T-cell (primary cell): ENCODE measurements at regions of chr2 and their contacts with region 1.

Region 1: GRCh38 chr2:230712443-230713330 is at the start of gene CAB39:
- DNase-seq: peak; percentile 74 to 96 (median 84)
- ATAC-seq: peak; percentile 84 to 89 (median 87)
- H3K4me3 ChIP-seq: peak within 1 kb of the TSS; percentile 84 to 95
- H3K4me3 Mint-ChIP-seq: peak within 1 kb of the TSS; percentile 91 to 99 (median 96)
- H3K27ac ChIP-seq: peak within 1 kb of the TSS; percentile 76
- H3K27ac Mint-ChIP-seq: peak within 1 kb of the TSS; percentile 95 to 98
- H3K4me1 ChIP-seq: peaks cover 27% of the 10 kb centered on the region in 2 experiments
- H3K4me1 Mint-ChIP-seq: peaks cover 40 to 50% (median 48%) of the 10 kb centered on the region in 3 donors
- H3K27me3 ChIP-seq: no peaks in the 10 kb centered on the region
- H3K27me3 Mint-ChIP-seq: no peaks in the 10 kb centered on the region
- total RNA-seq, gene CAB39: 91.7 to 102 (median 96.7) TPM

Region 2: DNA sequence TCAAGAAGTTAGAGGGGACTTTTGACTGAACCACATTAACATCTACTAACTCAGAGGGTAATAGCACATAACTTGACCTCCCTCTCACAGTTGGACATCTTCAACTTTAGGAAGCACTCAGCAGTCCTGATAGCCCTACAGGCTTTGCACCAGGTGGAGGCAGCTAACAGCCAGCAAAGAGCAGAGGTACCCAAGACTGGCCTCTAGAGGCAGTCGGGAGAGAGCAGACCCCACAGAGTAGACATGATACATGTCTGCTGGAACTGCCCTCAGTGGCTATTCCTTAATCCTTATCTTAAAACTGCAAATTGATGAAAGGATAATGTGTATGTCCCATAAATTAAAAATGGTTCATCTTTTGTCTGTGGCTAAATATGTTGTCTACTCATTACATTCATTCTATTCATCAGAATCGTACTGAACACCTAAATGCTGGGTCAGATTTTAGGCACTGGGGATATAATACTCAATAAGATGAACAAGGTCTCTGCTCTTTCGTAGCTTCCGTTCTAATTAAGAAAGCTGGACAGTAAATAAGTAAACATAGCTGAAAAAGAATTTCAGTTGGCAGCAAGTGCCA is 49.7 kb after region 1 on chr2:
- CTCF ChIA-PET with region 1: interaction called in 1 of 2 experiments, 10 read pairs
- POLR2A ChIA-PET with region 1: interaction called in 1 of 2 experiments, 3 read pairs
- DNase-seq: peak in 30 of 35 experiments; percentile 6 to 53 (median 18)
- ATAC-seq: peak; percentile 75 to 90 (median 86)
- H3K4me3 ChIP-seq: no peak overlapping the region
- H3K4me3 Mint-ChIP-seq: no peak overlapping the region
- H3K27ac ChIP-seq: no peak overlapping the region
- H3K27ac Mint-ChIP-seq: no peak overlapping the region
- H3K4me1 ChIP-seq: peaks cover 10 to 12% of the 10 kb centered on the region in 2 experiments
- H3K4me1 Mint-ChIP-seq: peaks cover 59 to 70% (median 62%) of the 10 kb centered on the region in 3 donors
- H3K27me3 ChIP-seq: no peaks in the 10 kb centered on the region
- H3K27me3 Mint-ChIP-seq: no peaks in the 10 kb centered on the region

Region 3: DNA sequence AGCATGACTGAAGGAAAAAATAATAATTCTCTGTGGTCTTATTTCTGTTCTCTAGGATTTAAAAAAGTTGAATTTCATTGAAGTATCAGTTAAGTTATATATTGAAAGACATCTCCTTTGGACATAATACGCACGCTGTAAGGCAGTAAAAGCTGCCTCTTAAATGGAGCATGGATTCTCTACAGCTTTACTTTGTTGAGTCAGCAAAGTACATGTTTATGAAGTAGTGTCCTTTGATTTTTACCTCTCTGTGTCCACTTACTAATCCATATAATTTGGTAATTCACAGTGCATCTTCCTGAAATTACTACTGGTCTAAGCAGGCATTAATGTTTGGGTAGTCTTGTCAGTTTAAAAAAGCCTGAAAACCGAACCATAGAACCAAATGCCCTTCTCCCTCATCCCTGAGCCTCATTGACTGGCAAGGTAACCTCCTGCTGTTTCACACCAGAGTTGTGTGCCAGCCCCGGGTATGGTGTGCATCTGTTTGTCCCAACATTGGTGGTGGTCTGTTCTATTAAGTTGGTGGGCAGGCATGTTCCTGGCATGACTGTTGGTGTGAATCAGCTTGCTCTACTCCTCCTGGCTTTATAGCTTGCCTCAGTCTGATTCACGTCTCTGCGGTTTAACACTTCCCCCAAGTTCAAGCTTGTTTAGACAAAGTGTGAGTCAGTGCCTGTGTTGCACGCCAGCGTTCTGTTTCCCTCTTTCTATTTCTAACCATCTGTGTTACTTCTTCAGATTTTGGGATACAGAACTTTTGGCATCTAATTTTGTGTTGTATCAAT is 81.1 kb after region 1 on chr2:
- CTCF ChIA-PET with region 1: interaction called, 10 to 31 read pairs
- POLR2A ChIA-PET with region 1: no interaction called
- DNase-seq: peak; percentile 28 to 88 (median 54)
- ATAC-seq: peak; percentile 92 to 96 (median 94)
- H3K4me3 ChIP-seq: no peak overlapping the region
- H3K4me3 Mint-ChIP-seq: peak overlapping the region; percentile 63 to 71 (median 66)
- H3K27ac ChIP-seq: peak overlapping the region; percentile 63
- H3K27ac Mint-ChIP-seq: peak overlapping the region in 1 of 2 donors; percentile 94
- H3K4me1 ChIP-seq: peaks cover 9 to 30% of the 10 kb centered on the region in 2 experiments
- H3K4me1 Mint-ChIP-seq: peaks cover 54 to 63% (median 55%) of the 10 kb centered on the region in 3 donors
- H3K27me3 ChIP-seq: no peaks in the 10 kb centered on the region
- H3K27me3 Mint-ChIP-seq: no peaks in the 10 kb centered on the region

Region 4: GRCh38 chr2:230798769-230799399 is 86.2 kb after region 1 on chr2:
- CTCF ChIA-PET with region 1: interaction called, 10 to 31 read pairs
- POLR2A ChIA-PET with region 1: no interaction called
- DNase-seq: peak in 26 of 35 experiments; percentile 9 to 80 (median 37)
- ATAC-seq: peak in 3 of 4 experiments; percentile 31 to 49 (median 32)
- H3K4me3 ChIP-seq: no peak overlapping the region
- H3K4me3 Mint-ChIP-seq: no peak overlapping the region
- H3K27ac ChIP-seq: no peak overlapping the region
- H3K27ac Mint-ChIP-seq: peak overlapping the region; percentile 66 to 80
- H3K4me1 ChIP-seq: peaks cover 9 to 25% of the 10 kb centered on the region in 2 experiments
- H3K4me1 Mint-ChIP-seq: peaks cover 18 to 21% (median 18%) of the 10 kb centered on the region in 3 donors
- H3K27me3 ChIP-seq: no peaks in the 10 kb centered on the region
- H3K27me3 Mint-ChIP-seq: no peaks in the 10 kb centered on the region

Region 5: GRCh38 chr2:231482806-231483391 is 770.2 kb after region 1 on chr2:
- CTCF ChIA-PET with region 1: interaction called in 1 of 2 experiments, 10 read pairs
- POLR2A ChIA-PET with region 1: no interaction called
- DNase-seq: peak; percentile 25 to 81 (median 59)
- ATAC-seq: peak; percentile 78 to 88 (median 84)
- H3K4me3 ChIP-seq: peak overlapping the region; percentile 56 to 58
- H3K4me3 Mint-ChIP-seq: peak overlapping the region; percentile 73 to 81 (median 78)
- H3K27ac ChIP-seq: peak overlapping the region; percentile 78
- H3K27ac Mint-ChIP-seq: peak overlapping the region; percentile 87 to 89
- H3K4me1 ChIP-seq: peaks cover 0 to 23% of the 10 kb centered on the region in 2 experiments
- H3K4me1 Mint-ChIP-seq: peaks cover 7 to 20% (median 19%) of the 10 kb centered on the region in 3 donors
- H3K27me3 ChIP-seq: no peaks in the 10 kb centered on the region
- H3K27me3 Mint-ChIP-seq: no peaks in the 10 kb centered on the region